B cell (primary cell): ENCODE measurements at regions of chr12 and their contacts with region 1.

Region 1: GRCh38 chr12:124774462-124775167 is 89.0 kb downstream of the SCARB1 start:
- DNase-seq: peak; percentile 69
- ATAC-seq: peak; percentile 72
- H3K4me3 ChIP-seq: peak overlapping the region in 4 of 5 experiments; percentile 15 to 40 (median 32)
- H3K4me3 Mint-ChIP-seq: peak overlapping the region; percentile 67
- H3K27ac ChIP-seq: no peak overlapping the region
- H3K27ac Mint-ChIP-seq: peak overlapping the region; percentile 2
- H3K4me1 ChIP-seq: peaks cover 25 to 31% of the 10 kb centered on the region in 2 donors
- H3K4me1 Mint-ChIP-seq: peaks cover 30% of the 10 kb centered on the region
- H3K27me3 ChIP-seq: peaks cover 0 to 11% (median 4%) of the 10 kb centered on the region in 4 experiments
- H3K27me3 Mint-ChIP-seq: peaks cover 16% of the 10 kb centered on the region
- CTCF ChIP-seq: no peak

Region 2: DNA sequence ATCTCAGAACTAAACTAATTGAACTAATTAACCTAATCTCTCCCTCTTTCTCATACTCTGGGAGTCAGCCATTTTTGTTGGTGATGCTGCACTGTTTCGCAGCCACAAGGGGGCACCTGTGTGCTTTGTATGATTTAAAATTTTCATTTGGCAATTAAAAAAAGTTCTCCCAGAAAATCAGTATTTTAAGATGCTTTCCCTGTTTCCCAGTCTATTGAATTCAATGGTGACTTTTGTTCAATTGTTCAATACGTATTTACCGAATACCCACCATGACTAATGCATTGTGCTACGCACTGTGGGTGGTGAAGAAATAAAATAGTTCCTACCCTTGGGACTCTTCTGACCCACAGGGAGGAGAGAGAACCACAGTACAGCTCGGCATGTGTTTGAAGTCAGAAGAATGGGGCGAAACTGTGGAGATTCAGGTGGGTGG is 737.9 kb before region 1 on chr12:
- CTCF ChIA-PET with region 1: interaction called, 160 read pairs
- POLR2A ChIA-PET with region 1: no interaction called
- intact Hi-C with region 1: loop called (anchors 1 kb)
- DNase-seq: peak; percentile 68
- ATAC-seq: no peak
- H3K4me3 ChIP-seq: no peak overlapping the region
- H3K4me3 Mint-ChIP-seq: no peak overlapping the region
- H3K27ac ChIP-seq: no peak overlapping the region
- H3K27ac Mint-ChIP-seq: no peak overlapping the region
- H3K4me1 ChIP-seq: no peaks in the 10 kb centered on the region
- H3K4me1 Mint-ChIP-seq: no peaks in the 10 kb centered on the region
- H3K27me3 ChIP-seq: no peaks in the 10 kb centered on the region
- H3K27me3 Mint-ChIP-seq: peaks cover 16% of the 10 kb centered on the region
- CTCF ChIP-seq: peak; percentile 98

Region 3: GRCh38 chr12:124740691-124741137 is 33.9 kb before region 1 on chr12:
- CTCF ChIA-PET with region 1: no interaction called
- POLR2A ChIA-PET with region 1: no interaction called
- intact Hi-C with region 1: no loop called
- DNase-seq: no peak
- ATAC-seq: no peak
- H3K4me3 ChIP-seq: no peak overlapping the region
- H3K4me3 Mint-ChIP-seq: no peak overlapping the region
- H3K27ac ChIP-seq: no peak overlapping the region
- H3K27ac Mint-ChIP-seq: no peak overlapping the region
- H3K4me1 ChIP-seq: no peaks in the 10 kb centered on the region
- H3K4me1 Mint-ChIP-seq: peaks cover 4% of the 10 kb centered on the region
- H3K27me3 ChIP-seq: peaks cover 0 to 24% (median 5%) of the 10 kb centered on the region in 4 experiments
- H3K27me3 Mint-ChIP-seq: peaks cover 28% of the 10 kb centered on the region
- CTCF ChIP-seq: no peak

Region 4: DNA sequence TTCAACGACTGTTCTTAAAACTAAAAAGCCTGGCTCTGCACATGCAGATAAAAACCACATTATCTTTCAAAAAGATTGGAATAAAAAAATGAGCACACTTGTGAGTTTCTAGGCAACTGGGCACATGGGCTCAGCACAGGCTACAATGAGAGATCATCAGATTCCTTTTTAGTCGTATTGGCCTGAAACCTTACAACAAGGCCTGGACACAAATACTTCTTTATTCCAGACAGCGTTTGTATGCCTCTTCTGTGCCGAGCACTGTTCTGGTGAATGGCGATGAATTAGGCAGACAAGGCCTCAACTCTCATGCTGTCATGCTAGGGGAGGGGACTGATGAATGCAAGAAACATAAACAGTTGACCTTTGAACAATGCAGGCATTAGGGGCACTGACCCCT is 753.7 kb after region 1 on chr12:
- CTCF ChIA-PET with region 1: no interaction called
- POLR2A ChIA-PET with region 1: no interaction called
- intact Hi-C with region 1: no loop called
- DNase-seq: no peak
- ATAC-seq: no peak
- H3K4me3 ChIP-seq: no peak overlapping the region
- H3K4me3 Mint-ChIP-seq: no peak overlapping the region
- H3K27ac ChIP-seq: no peak overlapping the region
- H3K27ac Mint-ChIP-seq: no peak overlapping the region
- H3K4me1 ChIP-seq: no peaks in the 10 kb centered on the region
- H3K4me1 Mint-ChIP-seq: no peaks in the 10 kb centered on the region
- H3K27me3 ChIP-seq: peaks cover 0 to 5% (median 3%) of the 10 kb centered on the region in 4 experiments
- H3K27me3 Mint-ChIP-seq: peaks cover 12% of the 10 kb centered on the region
- CTCF ChIP-seq: no peak